Transverse colon (tissue), 4 donors: ENCODE measurements at regions of chr3 and their contacts with region 1.

Region 1: GRCh38 chr3:58008140-58009025 is at the start of gene FLNB:
- DNase-seq: peak; percentile 83
- H3K4me3 ChIP-seq: peak within 1 kb of the TSS; percentile 74 to 88 (median 83)
- H3K27ac ChIP-seq: peak within 1 kb of the TSS; percentile 89 to 95 (median 90)
- H3K4me1 ChIP-seq: peaks cover 13 to 39% (median 33%) of the 10 kb centered on the region in 4 donors
- H3K27me3 ChIP-seq: no peaks in the 10 kb centered on the region
- CTCF ChIP-seq: peak; percentile 80 to 88 (median 83)
- EP300 ChIP-seq: no peak
- POLR2A ChIP-seq: peak; percentile 73
- total RNA-seq, gene FLNB: 282 to 707 (median 563) TPM

Region 2: GRCh38 chr3:57221883-57222282 is 786.5 kb before region 1 on chr3:
- in situ Hi-C with region 1: no loop called
- intact Hi-C with region 1: no loop called
- DNase-seq: no peak
- H3K4me3 ChIP-seq: no peak overlapping the region
- H3K27ac ChIP-seq: no peak overlapping the region
- H3K4me1 ChIP-seq: peaks cover 0 to 8% (median 4%) of the 10 kb centered on the region in 4 donors
- H3K27me3 ChIP-seq: no peaks in the 10 kb centered on the region
- CTCF ChIP-seq: no peak
- EP300 ChIP-seq: no peak
- POLR2A ChIP-seq: no peak

Region 3: DNA sequence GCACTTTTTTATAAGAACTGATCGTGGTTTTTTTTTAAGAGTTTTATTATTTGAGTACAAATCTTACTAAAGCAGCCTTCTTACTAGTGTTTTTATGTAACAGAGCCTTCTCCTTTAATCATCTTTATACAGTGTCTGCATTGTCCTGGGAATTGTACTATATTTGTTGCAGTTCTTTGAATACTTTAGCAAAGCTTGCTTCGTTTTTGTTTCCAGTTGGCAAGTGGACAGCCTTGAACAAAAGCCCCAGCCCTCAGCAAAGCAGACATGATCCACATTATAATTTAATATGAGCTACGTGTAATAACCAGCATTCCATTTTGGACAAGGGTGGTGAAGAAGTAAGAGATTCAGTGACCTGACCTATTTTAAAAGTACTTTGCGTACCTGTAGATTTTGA is 112.4 kb before region 1 on chr3:
- in situ Hi-C with region 1: no loop called
- intact Hi-C with region 1: no loop called
- DNase-seq: no peak
- H3K4me3 ChIP-seq: no peak overlapping the region
- H3K27ac ChIP-seq: peak overlapping the region; percentile 40 to 84 (median 80)
- H3K4me1 ChIP-seq: peaks cover 0 to 18% (median 4%) of the 10 kb centered on the region in 4 donors
- H3K27me3 ChIP-seq: no peaks in the 10 kb centered on the region
- CTCF ChIP-seq: no peak
- EP300 ChIP-seq: no peak
- POLR2A ChIP-seq: no peak

Region 4: DNA sequence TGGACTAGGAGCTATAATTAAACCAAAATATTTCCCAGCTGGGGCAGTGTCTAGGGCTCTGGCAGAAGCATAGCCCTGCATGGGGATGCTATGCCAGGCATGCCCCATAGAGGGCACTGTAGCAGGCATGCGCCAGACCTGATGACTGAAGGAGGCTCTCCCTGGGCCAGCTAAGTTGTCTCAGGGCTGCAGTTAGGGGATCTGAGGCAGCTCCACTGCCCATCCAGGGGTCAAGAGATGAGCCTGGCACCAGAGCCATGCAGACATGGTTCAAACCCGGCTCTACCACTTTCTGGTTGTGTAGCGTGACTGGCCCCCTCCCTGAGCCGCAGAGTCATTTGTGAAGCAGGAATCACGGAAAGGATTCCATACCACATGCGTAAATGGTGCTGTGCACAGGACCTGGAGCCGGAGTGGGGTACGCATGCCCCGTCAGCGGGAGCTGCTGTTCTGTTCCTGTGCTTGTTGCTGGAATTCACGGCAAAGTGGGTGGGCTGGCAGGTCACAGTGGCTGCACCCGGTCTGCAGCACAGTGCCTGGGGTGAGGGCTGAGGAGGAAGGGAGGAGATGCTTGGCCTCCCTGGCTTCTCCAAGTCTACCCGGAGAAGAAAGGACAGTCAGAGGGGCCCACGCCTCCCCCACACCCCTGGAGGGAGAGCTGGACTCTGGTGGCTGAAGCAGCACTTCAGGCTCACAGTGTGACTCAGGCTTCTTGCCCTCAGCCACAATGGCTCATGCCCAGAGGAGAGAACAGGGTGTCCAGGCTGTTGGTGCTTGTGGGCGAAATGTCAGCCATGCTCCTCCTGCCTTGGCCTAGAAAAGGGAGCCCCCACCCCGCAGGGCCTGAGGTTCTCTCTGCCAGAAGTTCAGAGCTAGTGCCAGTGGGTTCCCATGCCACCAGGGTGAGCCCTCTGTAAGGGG is 159.3 kb after region 1 on chr3:
- in situ Hi-C with region 1: no loop called
- intact Hi-C with region 1: loop called (anchors 5 kb)
- DNase-seq: peak; percentile 74
- H3K4me3 ChIP-seq: no peak overlapping the region
- H3K27ac ChIP-seq: peak overlapping the region; percentile 1 to 86 (median 52)
- H3K4me1 ChIP-seq: peaks cover 0 to 20% (median 17%) of the 10 kb centered on the region in 4 donors
- H3K27me3 ChIP-seq: no peaks in the 10 kb centered on the region
- CTCF ChIP-seq: peak; percentile 78 to 91 (median 86)
- EP300 ChIP-seq: no peak
- POLR2A ChIP-seq: no peak